ENCODE measurements at regions of chr19 and their contacts with region 1.

Region 1: GRCh38 chr19:17419621-17420466 is at the start of gene MVB12A:
- DNase-seq: peak; percentile 90 to 100 (median 96)
- ATAC-seq: peak; percentile 98
- H3K4me3 ChIP-seq: peak within 1 kb of the TSS; percentile 69 to 76
- H3K4me3 Mint-ChIP-seq: peak within 1 kb of the TSS; percentile 89
- H3K27ac ChIP-seq: peak within 1 kb of the TSS; percentile 47 to 51
- H3K27ac Mint-ChIP-seq: peak within 1 kb of the TSS; percentile 80
- H3K4me1 ChIP-seq: peaks cover 19% of the 10 kb centered on the region
- H3K4me1 Mint-ChIP-seq: peaks cover 18% of the 10 kb centered on the region
- H3K27me3 ChIP-seq: no peaks in the 10 kb centered on the region
- H3K27me3 Mint-ChIP-seq: no peaks in the 10 kb centered on the region
- CTCF ChIP-seq: no peak
- total RNA-seq, gene MVB12A: 9.1 to 10.4 TPM

Region 2: GRCh38 chr19:17336872-17337722 is 82.7 kb before region 1 on chr19 and contains the start of gene GTPBP3:
- CTCF ChIA-PET with region 1: no interaction called
- POLR2A ChIA-PET with region 1: no interaction called
- intact Hi-C with region 1: loop called (anchors 1 kb)
- DNase-seq: peak; percentile 90 to 99 (median 95)
- ATAC-seq: peak; percentile 90
- H3K4me3 ChIP-seq: peak within 1 kb of the TSS; percentile 90 to 98
- H3K4me3 Mint-ChIP-seq: peak within 1 kb of the TSS; percentile 88
- H3K27ac ChIP-seq: peak within 1 kb of the TSS; percentile 75 to 91
- H3K27ac Mint-ChIP-seq: peak within 1 kb of the TSS; percentile 91
- H3K4me1 ChIP-seq: peaks cover 34% of the 10 kb centered on the region
- H3K4me1 Mint-ChIP-seq: peaks cover 34% of the 10 kb centered on the region
- H3K27me3 ChIP-seq: no peaks in the 10 kb centered on the region
- H3K27me3 Mint-ChIP-seq: no peaks in the 10 kb centered on the region
- CTCF ChIP-seq: no peak
- total RNA-seq, gene GTPBP3: 20.8 to 25.7 TPM

Region 3: GRCh38 chr19:17405250-17406038 is 14.4 kb before region 1 on chr19 and contains the start of gene BST2:
- CTCF ChIA-PET with region 1: interaction called, 8 read pairs
- POLR2A ChIA-PET with region 1: interaction called, 8 read pairs
- intact Hi-C with region 1: loop called (anchors 1 kb)
- DNase-seq: peak in 7 of 9 experiments; percentile 45 to 90 (median 61)
- ATAC-seq: peak; percentile 82
- H3K4me3 ChIP-seq: peak within 1 kb of the TSS; percentile 84 to 86
- H3K4me3 Mint-ChIP-seq: peak within 1 kb of the TSS; percentile 95
- H3K27ac ChIP-seq: peak within 1 kb of the TSS; percentile 65 to 84
- H3K27ac Mint-ChIP-seq: peak within 1 kb of the TSS; percentile 92
- H3K4me1 ChIP-seq: peaks cover 28% of the 10 kb centered on the region
- H3K4me1 Mint-ChIP-seq: peaks cover 44% of the 10 kb centered on the region
- H3K27me3 ChIP-seq: no peaks in the 10 kb centered on the region
- H3K27me3 Mint-ChIP-seq: no peaks in the 10 kb centered on the region
- CTCF ChIP-seq: no peak
- total RNA-seq, gene BST2: 25.1 to 29.7 TPM